IMR-90 (cell line): ENCODE measurements at regions of chr16 and their contacts with region 1.

Region 1: GRCh38 chr16:25051406-25052150 is 36.4 kb upstream of the ARHGAP17 start:
- DNase-seq: peak; percentile 84
- ATAC-seq: no peak
- H3K4me3 ChIP-seq: no peak overlapping the region
- H3K27ac ChIP-seq: no peak overlapping the region
- H3K4me1 ChIP-seq: peaks cover 11% of the 10 kb centered on the region
- H3K27me3 ChIP-seq: no peaks in the 10 kb centered on the region
- CTCF ChIP-seq: no peak
- POLR2A ChIP-seq: 0 out of 2 replicates have a peak, but pooled peaks have one; percentile 31
- RAD21 ChIP-seq: no peak

Region 2: DNA sequence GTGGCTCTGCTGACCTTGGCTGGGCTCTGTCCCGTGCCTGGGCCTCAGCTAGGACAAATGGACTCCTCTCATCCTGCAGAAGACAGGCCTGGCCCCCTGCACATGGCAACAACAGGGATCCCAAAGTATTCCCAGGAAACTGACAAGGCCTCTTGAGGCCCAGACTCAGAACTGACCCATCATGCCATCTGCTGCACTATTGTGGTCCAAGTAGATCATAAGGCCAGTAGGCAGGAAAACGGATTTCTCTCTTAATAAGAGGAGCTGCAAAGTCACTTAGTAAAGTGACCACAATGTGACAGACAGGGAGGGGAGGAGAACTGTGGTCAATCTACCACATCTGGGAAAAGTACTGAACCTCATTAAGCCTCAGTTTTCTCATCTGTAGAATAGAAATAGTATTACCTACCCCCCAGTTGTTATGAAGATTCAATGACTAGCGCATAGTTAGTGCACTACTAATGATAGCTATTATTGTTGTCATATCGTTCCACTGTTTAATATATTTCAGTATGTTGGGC is 384.3 kb before region 1 on chr16:
- CTCF ChIA-PET with region 1: no interaction called
- POLR2A ChIA-PET with region 1: no interaction called
- dilution Hi-C with region 1: no loop called
- in situ Hi-C with region 1: no loop called
- intact Hi-C with region 1: no loop called
- DNase-seq: no peak
- ATAC-seq: no peak
- H3K4me3 ChIP-seq: no peak overlapping the region
- H3K27ac ChIP-seq: no peak overlapping the region
- H3K4me1 ChIP-seq: peaks cover 14% of the 10 kb centered on the region
- H3K27me3 ChIP-seq: no peaks in the 10 kb centered on the region
- CTCF ChIP-seq: no peak
- POLR2A ChIP-seq: no peak
- RAD21 ChIP-seq: no peak

Region 3: GRCh38 chr16:24863582-24864437 is 187.8 kb before region 1 on chr16:
- CTCF ChIA-PET with region 1: no interaction called
- POLR2A ChIA-PET with region 1: no interaction called
- dilution Hi-C with region 1: no loop called
- in situ Hi-C with region 1: no loop called
- intact Hi-C with region 1: no loop called
- DNase-seq: no peak
- ATAC-seq: no peak
- H3K4me3 ChIP-seq: no peak overlapping the region
- H3K27ac ChIP-seq: no peak overlapping the region
- H3K4me1 ChIP-seq: no peaks in the 10 kb centered on the region
- H3K27me3 ChIP-seq: peaks cover 5% of the 10 kb centered on the region
- CTCF ChIP-seq: no peak
- POLR2A ChIP-seq: no peak
- RAD21 ChIP-seq: no peak

Region 4: GRCh38 chr16:24930437-24930836 is 121.1 kb before region 1 on chr16:
- CTCF ChIA-PET with region 1: no interaction called
- POLR2A ChIA-PET with region 1: no interaction called
- dilution Hi-C with region 1: no loop called
- in situ Hi-C with region 1: no loop called
- intact Hi-C with region 1: no loop called
- DNase-seq: no peak
- ATAC-seq: no peak
- H3K4me3 ChIP-seq: no peak overlapping the region
- H3K27ac ChIP-seq: no peak overlapping the region
- H3K4me1 ChIP-seq: no peaks in the 10 kb centered on the region
- H3K27me3 ChIP-seq: no peaks in the 10 kb centered on the region
- CTCF ChIP-seq: no peak
- POLR2A ChIP-seq: no peak
- RAD21 ChIP-seq: no peak

Region 5: DNA sequence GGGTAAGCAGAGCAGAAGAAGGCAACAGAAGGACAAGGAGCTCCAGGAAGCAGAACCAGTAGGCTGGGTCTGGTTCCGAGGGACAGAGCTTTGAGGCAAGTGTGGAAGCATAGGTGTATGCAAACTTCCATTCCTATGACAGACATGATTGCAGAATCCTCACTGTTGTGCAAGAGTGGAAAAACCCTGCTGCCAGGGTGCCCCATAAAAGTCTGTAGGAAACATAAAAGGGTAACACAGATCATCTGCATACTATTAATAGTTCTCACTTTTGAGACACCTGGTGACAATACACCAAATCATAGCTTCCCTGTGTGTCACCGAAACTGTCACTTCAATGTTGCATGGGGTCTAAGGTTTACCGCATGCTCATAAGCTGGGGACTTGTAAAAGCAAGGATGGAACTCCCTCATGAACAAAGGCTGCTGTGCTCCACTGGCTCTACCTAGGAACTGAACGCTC is 76.1 kb before region 1 on chr16:
- CTCF ChIA-PET with region 1: no interaction called
- POLR2A ChIA-PET with region 1: no interaction called
- dilution Hi-C with region 1: no loop called
- in situ Hi-C with region 1: no loop called
- intact Hi-C with region 1: loop called (anchors 2 kb)
- DNase-seq: peak; percentile 66
- ATAC-seq: no peak
- H3K4me3 ChIP-seq: no peak overlapping the region
- H3K27ac ChIP-seq: peak overlapping the region; percentile 97
- H3K4me1 ChIP-seq: peaks cover 27% of the 10 kb centered on the region
- H3K27me3 ChIP-seq: no peaks in the 10 kb centered on the region
- CTCF ChIP-seq: no peak
- POLR2A ChIP-seq: no peak
- RAD21 ChIP-seq: no peak

Region 6: GRCh38 chr16:25014500-25015147 is 37.0 kb before region 1 on chr16:
- CTCF ChIA-PET with region 1: no interaction called
- POLR2A ChIA-PET with region 1: interaction called, 3 read pairs
- dilution Hi-C with region 1: no loop called
- in situ Hi-C with region 1: no loop called
- intact Hi-C with region 1: loop called (anchors 2 kb)
- DNase-seq: peak; percentile 48
- ATAC-seq: peak; percentile 45
- H3K4me3 ChIP-seq: peak overlapping the region; percentile 90
- H3K27ac ChIP-seq: peak overlapping the region; percentile 98
- H3K4me1 ChIP-seq: peaks cover 24% of the 10 kb centered on the region
- H3K27me3 ChIP-seq: no peaks in the 10 kb centered on the region
- CTCF ChIP-seq: no peak
- POLR2A ChIP-seq: no peak
- RAD21 ChIP-seq: peak; percentile 3; the same call in 1 of the 2 replicates

Region 7: DNA sequence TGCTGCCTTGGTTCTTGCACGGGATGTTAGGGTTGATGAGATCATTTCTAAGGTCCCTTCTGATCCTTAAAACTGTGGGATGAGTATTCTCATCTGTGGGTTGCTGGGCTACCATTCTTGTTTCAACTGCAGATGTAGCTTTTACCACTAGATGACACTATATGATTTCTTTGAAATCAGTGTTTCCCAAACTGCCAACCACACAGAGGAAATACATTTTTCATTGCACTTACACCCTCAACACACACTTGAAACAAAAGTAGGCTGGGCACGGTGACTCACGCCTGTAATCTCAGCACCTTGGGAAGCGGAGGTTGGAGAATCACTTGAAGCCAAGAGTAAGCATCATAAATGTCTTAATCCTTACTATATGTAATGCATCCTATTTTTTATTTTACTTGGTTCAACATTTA is 75.2 kb after region 1 on chr16:
- CTCF ChIA-PET with region 1: interaction called, 4 read pairs
- POLR2A ChIA-PET with region 1: no interaction called
- dilution Hi-C with region 1: no loop called
- in situ Hi-C with region 1: loop called (anchors 5 kb)
- intact Hi-C with region 1: loop called (anchors 1 kb)
- DNase-seq: peak; percentile 91
- ATAC-seq: peak; percentile 93
- H3K4me3 ChIP-seq: no peak overlapping the region
- H3K27ac ChIP-seq: no peak overlapping the region
- H3K4me1 ChIP-seq: peaks cover 5% of the 10 kb centered on the region
- H3K27me3 ChIP-seq: no peaks in the 10 kb centered on the region
- CTCF ChIP-seq: peak; percentile 85
- POLR2A ChIP-seq: no peak
- RAD21 ChIP-seq: peak; percentile 75

Region 8: GRCh38 chr16:25224731-25225319 is 173.2 kb after region 1 on chr16:
- CTCF ChIA-PET with region 1: interaction called, 6 read pairs
- POLR2A ChIA-PET with region 1: no interaction called
- dilution Hi-C with region 1: no loop called
- in situ Hi-C with region 1: loop called (anchors 5 kb)
- intact Hi-C with region 1: loop called (anchors 2 kb)
- DNase-seq: no peak
- ATAC-seq: no peak
- H3K4me3 ChIP-seq: no peak overlapping the region
- H3K27ac ChIP-seq: no peak overlapping the region
- H3K4me1 ChIP-seq: no peaks in the 10 kb centered on the region
- H3K27me3 ChIP-seq: peaks cover 3% of the 10 kb centered on the region; the same call in 1 of the 2 replicates
- CTCF ChIP-seq: no peak
- POLR2A ChIP-seq: no peak
- RAD21 ChIP-seq: no peak

Region 9: GRCh38 chr16:26149364-26150190 is 1098.0 kb after region 1 on chr16:
- CTCF ChIA-PET with region 1: no interaction called
- POLR2A ChIA-PET with region 1: no interaction called
- dilution Hi-C with region 1: no loop called
- in situ Hi-C with region 1: no loop called
- intact Hi-C with region 1: no loop called
- DNase-seq: no peak
- ATAC-seq: no peak
- H3K4me3 ChIP-seq: no peak overlapping the region
- H3K27ac ChIP-seq: no peak overlapping the region
- H3K4me1 ChIP-seq: no peaks in the 10 kb centered on the region
- H3K27me3 ChIP-seq: no peaks in the 10 kb centered on the region
- CTCF ChIP-seq: no peak
- POLR2A ChIP-seq: no peak
- RAD21 ChIP-seq: no peak